Activated naive CD4-positive, alpha-beta T cell treated with anti-CD3 and anti-CD28 coated beads for 36 hours (primary cell): ENCODE measurements at regions of chr1 and their contacts with region 1.

Region 1: DNA sequence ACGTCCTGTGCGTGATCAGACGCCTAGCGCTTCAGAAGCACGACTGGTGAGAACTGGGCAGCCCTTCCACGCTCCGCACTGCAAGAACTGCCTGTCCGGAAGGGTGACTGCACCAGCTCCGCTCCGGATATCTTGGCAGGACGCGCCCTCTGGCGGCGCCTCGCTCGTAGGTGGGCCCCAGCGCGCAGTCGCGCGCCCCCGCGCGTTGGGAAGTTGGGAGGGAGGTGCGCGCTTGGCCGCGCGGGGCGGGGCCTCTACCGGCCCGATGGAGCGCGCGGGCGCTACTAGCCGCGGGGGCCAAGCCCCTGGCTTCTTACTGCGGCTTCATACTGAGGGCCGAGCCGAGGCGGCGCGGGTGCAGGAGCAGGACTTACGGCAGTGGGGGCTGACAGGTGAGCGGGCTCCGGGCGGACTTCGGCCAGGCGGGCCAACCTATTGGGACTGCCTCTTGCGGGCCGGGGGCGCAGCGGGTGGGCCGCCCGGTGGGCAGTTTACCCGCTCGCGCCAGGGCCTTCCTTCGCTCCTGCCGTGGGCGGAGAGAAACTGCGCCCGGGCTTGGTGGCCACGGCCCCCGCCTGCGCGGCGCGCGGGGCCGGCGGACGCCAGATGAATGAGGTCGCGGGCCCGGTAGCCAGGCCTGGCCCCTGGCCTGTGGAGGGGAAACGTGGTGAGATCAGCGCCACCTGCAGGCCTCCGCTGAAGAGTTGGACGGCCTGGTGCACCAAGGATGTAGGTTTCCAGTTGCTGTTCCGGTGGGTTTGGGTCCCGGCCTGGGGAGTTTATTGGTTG is at the start of gene CHD1L:
- DNase-seq: peak; percentile 96
- H3K4me3 Mint-ChIP-seq: peak within 1 kb of the TSS; percentile 85
- H3K27ac Mint-ChIP-seq: peak within 1 kb of the TSS; percentile 39
- H3K4me1 Mint-ChIP-seq: peaks cover 35% of the 10 kb centered on the region
- H3K27me3 Mint-ChIP-seq: no peaks in the 10 kb centered on the region
- total RNA-seq, gene CHD1L: 54.8 to 56.8 TPM

Region 2: DNA sequence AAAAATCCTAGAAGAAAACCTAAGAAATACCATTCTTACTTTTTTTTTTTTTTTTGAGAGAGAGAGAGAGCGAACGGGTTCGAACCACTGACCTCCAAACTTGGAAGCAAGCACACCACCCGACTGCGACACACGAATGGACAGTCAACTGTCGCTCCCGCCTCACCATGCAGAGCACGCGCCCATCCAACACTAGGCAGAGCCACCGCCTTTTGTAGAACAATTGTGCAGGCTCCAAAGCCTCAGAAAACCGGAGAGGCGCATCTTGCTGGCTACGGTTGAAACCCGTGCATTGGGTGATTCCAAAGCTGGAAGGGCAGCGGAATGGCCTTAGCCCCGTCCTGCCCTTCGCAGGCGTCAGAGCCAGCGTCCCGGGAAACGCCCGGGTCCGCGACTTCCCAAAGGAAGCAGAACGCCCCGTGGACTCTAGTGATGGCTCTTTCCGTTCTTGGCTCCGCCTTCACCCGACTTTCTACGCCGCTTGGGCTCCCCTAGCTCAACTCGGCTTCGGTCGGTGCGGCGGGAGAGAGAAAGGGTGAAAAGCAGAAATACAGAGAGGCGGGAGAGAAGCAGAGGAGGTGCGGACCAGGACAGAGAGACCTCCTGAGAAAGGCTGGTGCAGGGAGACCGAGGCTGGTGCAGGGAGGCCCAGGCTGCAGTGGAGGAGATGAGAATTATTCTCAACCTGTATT is 170.1 kb before region 1 on chr1:
- CTCF ChIA-PET with region 1: no interaction called
- intact Hi-C with region 1: loop called (anchors 2 kb)
- DNase-seq: peak; percentile 42
- H3K4me3 Mint-ChIP-seq: peak overlapping the region; percentile 84
- H3K27ac Mint-ChIP-seq: peak overlapping the region; percentile 39
- H3K4me1 Mint-ChIP-seq: peaks cover 30% of the 10 kb centered on the region
- H3K27me3 Mint-ChIP-seq: peaks cover 37% of the 10 kb centered on the region

Region 3: DNA sequence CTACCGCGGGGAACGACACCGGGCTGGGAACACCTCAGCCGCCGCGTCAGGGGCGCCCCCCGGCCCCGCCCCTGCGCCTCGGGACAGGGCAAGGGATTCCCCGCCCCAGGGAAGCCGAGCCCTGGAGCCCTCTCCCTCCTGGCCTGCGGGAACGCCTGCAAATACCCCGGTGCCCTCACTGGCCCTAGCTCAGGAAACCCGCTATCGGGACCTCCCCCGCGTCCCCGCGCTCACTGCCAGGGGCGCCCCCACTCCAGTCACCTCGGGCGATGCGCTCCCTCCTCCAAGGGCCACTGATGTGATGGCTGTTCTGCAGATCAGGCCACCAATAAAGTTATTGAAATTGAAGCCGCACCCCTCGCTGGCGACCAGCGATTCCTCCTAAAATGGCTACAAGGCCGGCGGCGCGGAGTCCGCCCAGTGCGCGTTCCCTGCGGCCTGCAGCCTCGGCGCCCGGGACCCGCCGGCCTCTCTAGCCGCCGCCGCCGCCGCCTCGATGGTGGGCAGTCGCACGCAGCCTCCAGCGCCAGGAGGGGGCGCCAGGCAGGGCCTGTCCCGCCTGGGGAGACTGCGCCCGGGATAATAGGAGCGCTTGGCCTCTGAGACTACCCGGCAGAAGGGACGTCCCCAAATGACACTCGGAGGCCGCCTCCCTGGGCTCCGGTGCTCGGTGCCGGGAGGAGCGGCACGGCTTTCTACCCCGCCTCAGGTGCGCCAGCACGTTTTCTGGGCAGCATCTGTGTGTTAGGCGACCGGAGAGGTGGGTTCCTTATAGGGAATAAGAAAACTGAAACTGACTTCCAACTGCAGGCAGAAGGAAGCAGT is 70.3 kb before region 1 on chr1 and contains the start of gene PRKAB2:
- CTCF ChIA-PET with region 1: interaction called, 39 read pairs
- intact Hi-C with region 1: loop called (anchors 1 kb)
- DNase-seq: peak; percentile 91
- H3K4me3 Mint-ChIP-seq: peak within 1 kb of the TSS; percentile 98
- H3K27ac Mint-ChIP-seq: peak within 1 kb of the TSS; percentile 96
- H3K4me1 Mint-ChIP-seq: peaks cover 32% of the 10 kb centered on the region
- H3K27me3 Mint-ChIP-seq: peaks cover 1% of the 10 kb centered on the region
- total RNA-seq, gene PRKAB2: 3.4 to 4.4 TPM

Region 4: GRCh38 chr1:147225193-147225730 is 17.4 kb before region 1 on chr1 and contains the start of gene FMO5:
- CTCF ChIA-PET with region 1: interaction called, 3 read pairs
- intact Hi-C with region 1: loop called (anchors 1 kb)
- DNase-seq: peak; percentile 71
- H3K4me3 Mint-ChIP-seq: peak within 1 kb of the TSS; percentile 90
- H3K27ac Mint-ChIP-seq: no peak within 1 kb of the TSS
- H3K4me1 Mint-ChIP-seq: peaks cover 7% of the 10 kb centered on the region
- H3K27me3 Mint-ChIP-seq: no peaks in the 10 kb centered on the region
- total RNA-seq, gene FMO5: 0.14 TPM in 1 of 2 experiments, not detected in the other